ENCODE measurements at regions of chr3 and their contacts with region 1.

Region 1: GRCh38 chr3:138068579-138069174 is 46.7 kb downstream of the DZIP1L start:
- DNase-seq: peak; percentile 80
- ATAC-seq: peak; percentile 99
- H3K4me3 ChIP-seq: no peak overlapping the region
- H3K27ac ChIP-seq: no peak overlapping the region
- H3K4me1 ChIP-seq: peaks cover 13% of the 10 kb centered on the region
- H3K27me3 ChIP-seq: no peaks in the 10 kb centered on the region
- CTCF ChIP-seq: peak; percentile 97
- POLR2A ChIP-seq: no peak
- RAD21 ChIP-seq: peak; percentile 100

Region 2: GRCh38 chr3:138118612-138119422 is 50.1 kb after region 1 on chr3:
- CTCF ChIA-PET with region 1: interaction called, 14 read pairs
- POLR2A ChIA-PET with region 1: interaction called, 3 read pairs
- dilution Hi-C with region 1: no loop called
- in situ Hi-C with region 1: loop called (anchors 5 kb)
- intact Hi-C with region 1: loop called (anchors 1 kb)
- DNase-seq: peak; percentile 73
- ATAC-seq: peak; percentile 50
- H3K4me3 ChIP-seq: no peak overlapping the region
- H3K27ac ChIP-seq: no peak overlapping the region
- H3K4me1 ChIP-seq: no peaks in the 10 kb centered on the region; the same call in 1 of the 2 replicates
- H3K27me3 ChIP-seq: no peaks in the 10 kb centered on the region
- CTCF ChIP-seq: peak; percentile 89
- POLR2A ChIP-seq: no peak
- RAD21 ChIP-seq: peak; percentile 94

Region 3: GRCh38 chr3:138241061-138241460 is 172.4 kb after region 1 on chr3:
- CTCF ChIA-PET with region 1: no interaction called
- POLR2A ChIA-PET with region 1: no interaction called
- dilution Hi-C with region 1: no loop called
- in situ Hi-C with region 1: no loop called
- intact Hi-C with region 1: loop called (anchors 10 kb)
- DNase-seq: peak; percentile 78
- ATAC-seq: peak; percentile 75
- H3K4me3 ChIP-seq: no peak overlapping the region
- H3K27ac ChIP-seq: no peak overlapping the region
- H3K4me1 ChIP-seq: no peaks in the 10 kb centered on the region
- H3K27me3 ChIP-seq: no peaks in the 10 kb centered on the region
- CTCF ChIP-seq: no peak
- POLR2A ChIP-seq: no peak
- RAD21 ChIP-seq: no peak

Region 4: DNA sequence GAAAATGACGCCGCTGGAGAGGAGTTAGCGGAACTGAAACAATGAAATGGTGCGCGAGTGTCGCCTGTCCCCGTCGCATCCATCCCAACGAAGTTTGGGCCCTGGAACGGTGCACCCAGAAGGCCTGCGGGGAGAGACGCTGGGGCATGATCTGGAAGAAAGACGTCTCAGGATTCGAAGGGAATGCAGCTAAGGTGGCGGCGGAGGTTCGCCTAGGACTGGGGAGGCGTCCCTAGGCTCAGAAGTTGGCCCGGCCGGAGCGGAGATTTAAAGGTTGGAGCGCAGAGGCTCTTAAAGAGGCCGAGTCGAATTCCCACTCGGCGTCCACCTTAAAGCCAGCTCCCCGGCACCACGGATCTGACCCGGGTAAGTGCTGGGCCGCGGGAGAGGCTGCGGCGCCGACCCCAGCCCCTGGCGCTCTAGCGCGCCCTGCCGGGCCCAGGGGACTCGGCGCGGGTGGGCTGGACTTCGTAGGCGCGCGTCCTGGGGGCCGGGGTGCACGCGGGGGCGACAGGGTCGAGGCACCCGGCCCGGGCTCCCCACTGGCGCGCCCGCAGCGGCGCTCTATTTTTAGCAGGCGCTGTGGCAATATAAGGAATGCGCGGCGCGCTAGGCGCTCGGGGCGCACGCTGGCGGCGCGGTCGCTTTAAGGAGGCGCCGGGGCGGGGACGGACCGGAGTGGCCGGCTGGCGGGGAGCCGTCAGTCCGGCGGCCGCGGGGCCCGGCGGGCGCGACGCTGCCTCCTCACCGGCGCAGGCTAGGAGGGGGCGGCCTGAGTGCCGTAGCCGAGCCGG is 279.5 kb after region 1 on chr3 and contains the start of gene MRAS:
- CTCF ChIA-PET with region 1: no interaction called
- POLR2A ChIA-PET with region 1: no interaction called
- dilution Hi-C with region 1: no loop called
- in situ Hi-C with region 1: no loop called
- intact Hi-C with region 1: loop called (anchors 5 kb)
- DNase-seq: peak; percentile 73
- ATAC-seq: peak; percentile 78
- H3K4me3 ChIP-seq: peak within 1 kb of the TSS; percentile 84
- H3K27ac ChIP-seq: peak within 1 kb of the TSS; percentile 70
- H3K4me1 ChIP-seq: peaks cover 10% of the 10 kb centered on the region
- H3K27me3 ChIP-seq: no peaks in the 10 kb centered on the region
- CTCF ChIP-seq: peak; percentile 50
- POLR2A ChIP-seq: peak; percentile 79
- RAD21 ChIP-seq: peak; percentile 38
- total RNA-seq, gene MRAS: 56.1 and 59.3 TPM in 2 replicates

Region 5: GRCh38 chr3:138923531-138923994 is 854.9 kb after region 1 on chr3:
- CTCF ChIA-PET with region 1: no interaction called
- POLR2A ChIA-PET with region 1: no interaction called
- dilution Hi-C with region 1: no loop called
- in situ Hi-C with region 1: loop called (anchors 10 kb)
- intact Hi-C with region 1: no loop called
- DNase-seq: peak; percentile 83
- ATAC-seq: peak; percentile 77
- H3K4me3 ChIP-seq: no peak overlapping the region
- H3K27ac ChIP-seq: no peak overlapping the region
- H3K4me1 ChIP-seq: peaks cover 9% of the 10 kb centered on the region
- H3K27me3 ChIP-seq: peaks cover 5% of the 10 kb centered on the region; the same call in 1 of the 2 replicates
- CTCF ChIP-seq: peak; percentile 89
- POLR2A ChIP-seq: no peak
- RAD21 ChIP-seq: peak; percentile 80

Measured in IMR-90 (cell line).